Left cardiac atrium (tissue), 4 donors: ENCODE measurements at regions of chr5 and their contacts with region 1.

Region 1: DNA sequence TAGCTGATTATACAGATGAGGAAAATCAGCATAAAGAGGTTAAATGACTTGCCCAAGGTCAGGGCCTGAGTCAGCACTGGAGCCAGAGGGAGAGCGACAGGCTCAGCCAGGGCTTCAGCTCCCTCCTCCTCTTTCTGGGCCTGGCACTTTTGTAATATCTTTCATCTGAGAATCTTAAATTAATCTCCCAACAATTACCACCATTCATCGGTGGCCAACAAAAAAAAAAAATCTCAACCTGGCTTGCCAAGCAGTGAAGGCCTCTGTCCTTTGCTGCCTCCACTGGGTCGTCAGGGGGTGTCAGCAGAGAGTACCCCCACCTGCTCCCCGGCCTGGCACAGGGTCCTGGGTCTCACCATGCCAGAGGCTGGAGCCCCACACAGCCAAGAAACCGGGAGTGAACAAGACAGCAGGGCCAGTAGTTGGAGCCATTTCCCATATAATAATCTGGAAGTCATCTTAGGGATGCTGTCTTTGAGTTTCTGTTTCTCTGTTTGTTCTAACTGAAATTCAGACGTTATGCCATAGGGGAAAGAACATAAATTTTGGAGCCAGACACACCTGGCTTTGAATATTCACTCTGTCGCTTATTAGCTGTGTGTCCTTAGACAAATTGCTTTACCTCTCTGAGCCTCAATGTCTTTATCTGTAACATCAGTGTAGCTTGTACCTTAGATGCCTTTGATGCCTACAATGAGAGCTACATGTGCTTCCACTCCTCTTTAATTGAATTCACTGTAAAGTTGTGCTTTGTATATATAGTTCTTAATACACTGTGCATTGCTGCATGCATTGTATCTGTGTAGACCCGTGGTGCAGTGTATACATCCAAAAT is 299.9 kb upstream of the MSX2 start:
- DNase-seq: no peak
- ATAC-seq: no peak

Region 2: GRCh38 chr5:174735498-174736330 is 311.3 kb after region 1 on chr5:
- intact Hi-C with region 1: loop called in 1 of 2 experiments (anchors 10 kb)
- DNase-seq: no peak
- ATAC-seq: peak in 1 of 2 donors; percentile 53

Region 3: DNA sequence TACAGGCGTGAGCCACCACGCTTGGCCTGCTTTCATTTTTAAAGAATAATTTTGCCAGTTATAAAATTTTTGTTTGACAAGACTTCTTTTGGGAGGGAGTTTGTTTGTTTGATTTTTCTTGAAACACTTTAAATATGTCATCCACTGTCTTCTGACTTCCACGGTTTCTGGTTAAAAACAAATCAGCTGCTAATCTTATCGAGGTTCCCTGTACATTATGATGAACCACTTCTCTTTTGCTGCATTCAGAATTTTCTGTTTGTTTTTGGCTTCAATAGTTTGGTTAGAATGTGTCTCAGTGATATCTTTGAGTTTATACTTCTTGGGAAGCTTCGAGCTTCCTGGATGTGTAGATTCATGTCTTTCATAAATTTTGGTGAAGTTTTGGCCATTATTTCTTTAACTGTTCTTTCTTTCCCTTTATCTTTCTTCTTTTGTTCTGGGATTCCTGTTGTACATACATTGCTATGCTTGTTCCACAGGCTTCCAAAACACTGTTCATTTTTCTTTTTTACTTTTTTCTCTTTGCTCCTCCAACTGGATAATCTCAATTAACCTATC is 360.8 kb after region 1 on chr5:
- intact Hi-C with region 1: loop called in 1 of 2 experiments (anchors 5 kb)
- DNase-seq: no peak
- ATAC-seq: no peak

Region 4: GRCh38 chr5:174935854-174936474 is 511.5 kb after region 1 on chr5:
- intact Hi-C with region 1: loop called in 1 of 2 experiments (anchors 10 kb)
- DNase-seq: peak; percentile 45
- ATAC-seq: peak; percentile 61 to 72